ENCODE measurements at regions of chr10 and their contacts with region 1.

Region 1: DNA sequence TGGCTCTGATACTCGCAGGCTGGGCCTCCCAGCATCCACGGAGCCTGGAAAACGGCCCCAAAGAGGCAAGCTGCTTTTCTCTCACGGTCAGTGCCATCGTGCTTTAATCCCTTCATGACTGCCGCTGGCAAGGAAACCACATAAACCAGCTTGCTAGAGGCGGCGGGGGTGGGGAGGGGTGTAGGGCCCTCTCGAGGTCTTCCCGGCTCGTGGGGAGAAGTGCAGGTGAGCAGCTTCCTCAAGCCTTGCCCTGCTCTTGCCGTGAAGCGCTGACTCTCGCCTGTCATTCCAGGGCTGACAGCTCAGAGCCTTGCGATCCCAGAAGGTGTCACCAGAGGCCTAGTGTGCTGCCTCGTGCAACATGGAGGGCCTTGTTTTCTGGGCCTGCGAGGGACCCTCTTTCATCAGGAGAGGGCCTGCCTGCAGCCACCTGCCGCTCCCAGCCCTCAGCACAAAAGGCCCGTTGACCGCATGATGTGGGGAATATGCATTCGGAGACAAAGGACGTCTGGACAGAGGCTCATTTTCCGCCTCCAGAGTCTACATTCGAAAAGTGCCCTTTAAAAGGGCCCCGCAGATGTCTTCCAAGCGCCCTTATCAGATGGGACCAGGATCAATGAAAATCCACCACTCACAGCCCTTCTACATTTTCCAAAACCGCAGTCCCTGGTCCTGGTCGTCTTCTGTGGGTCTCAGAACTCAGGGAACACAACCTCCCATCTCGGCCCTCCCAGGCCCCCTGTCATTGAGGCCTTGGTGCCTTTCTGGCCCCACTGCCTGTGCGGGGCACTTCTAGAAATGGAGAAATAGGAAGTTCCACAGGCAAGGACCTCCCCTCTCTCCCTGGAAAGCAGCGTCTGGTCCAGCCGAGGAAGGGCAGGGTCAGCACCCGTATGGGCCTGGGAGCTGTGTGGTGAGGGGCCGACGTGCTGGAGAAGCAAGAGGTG is 58.7 kb downstream of the ZRANB1 start:
- DNase-seq: peak in 2 of 5 donors; percentile 8 to 52
- ATAC-seq: peak; percentile 27 to 51 (median 34)
- H3K4me3 ChIP-seq: no peak overlapping the region
- H3K27ac ChIP-seq: peak overlapping the region in 11 of 12 donors; percentile 24 to 86 (median 62)
- H3K4me1 ChIP-seq: peaks cover 0 to 67% (median 43%) of the 10 kb centered on the region in 12 donors
- H3K27me3 ChIP-seq: no peaks in the 10 kb centered on the region
- CTCF ChIP-seq: peak in 8 of 12 donors; percentile 8 to 41 (median 26)
- POLR2A ChIP-seq: no peak

Region 2: DNA sequence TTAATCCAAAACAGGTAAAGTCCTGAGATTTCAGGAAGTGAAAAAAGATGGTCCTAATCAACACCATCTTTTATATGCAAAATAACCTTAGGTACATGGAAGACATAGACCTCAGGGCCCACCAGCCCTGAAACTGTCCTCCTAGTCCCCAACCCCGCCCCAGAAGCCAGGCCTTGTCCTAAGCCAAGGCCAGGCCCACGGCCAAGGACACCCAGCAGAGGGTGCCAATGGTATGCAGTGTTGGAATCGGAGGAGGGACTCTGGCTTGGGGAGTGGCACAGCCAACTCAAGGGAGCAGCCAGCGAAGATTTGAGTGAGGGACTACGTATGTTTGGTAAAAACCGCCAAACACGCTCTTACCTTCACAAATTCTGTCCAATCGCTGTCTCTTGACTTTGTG is 38.0 kb after region 1 on chr10:
- intact Hi-C with region 1: loop called in 2 of 10 experiments (anchors 5 kb)
- DNase-seq: peak in 3 of 5 donors; percentile 69 to 77 (median 76)
- ATAC-seq: peak; percentile 89 to 96 (median 92)
- H3K4me3 ChIP-seq: no peak overlapping the region
- H3K27ac ChIP-seq: peak overlapping the region in 6 of 12 donors; percentile 9 to 58 (median 33)
- H3K4me1 ChIP-seq: peaks cover 6 to 74% (median 45%) of the 10 kb centered on the region in 12 donors
- H3K27me3 ChIP-seq: no peaks in the 10 kb centered on the region
- CTCF ChIP-seq: peak in 9 of 12 donors; percentile 9 to 48 (median 30)
- POLR2A ChIP-seq: no peak

Region 3: GRCh38 chr10:125123476-125124114 is 123.0 kb after region 1 on chr10:
- intact Hi-C with region 1: no loop called
- DNase-seq: peak; percentile 84 to 95 (median 89)
- ATAC-seq: peak; percentile 76 to 93 (median 88)
- H3K4me3 ChIP-seq: peak overlapping the region in 9 of 12 donors; percentile 6 to 39 (median 26)
- H3K27ac ChIP-seq: peak overlapping the region; percentile 44 to 88 (median 82)
- H3K4me1 ChIP-seq: peaks cover 7 to 98% (median 74%) of the 10 kb centered on the region in 12 donors
- H3K27me3 ChIP-seq: no peaks in the 10 kb centered on the region
- CTCF ChIP-seq: peak in 1 of 12 donors; percentile 19
- POLR2A ChIP-seq: no peak

Region 4: DNA sequence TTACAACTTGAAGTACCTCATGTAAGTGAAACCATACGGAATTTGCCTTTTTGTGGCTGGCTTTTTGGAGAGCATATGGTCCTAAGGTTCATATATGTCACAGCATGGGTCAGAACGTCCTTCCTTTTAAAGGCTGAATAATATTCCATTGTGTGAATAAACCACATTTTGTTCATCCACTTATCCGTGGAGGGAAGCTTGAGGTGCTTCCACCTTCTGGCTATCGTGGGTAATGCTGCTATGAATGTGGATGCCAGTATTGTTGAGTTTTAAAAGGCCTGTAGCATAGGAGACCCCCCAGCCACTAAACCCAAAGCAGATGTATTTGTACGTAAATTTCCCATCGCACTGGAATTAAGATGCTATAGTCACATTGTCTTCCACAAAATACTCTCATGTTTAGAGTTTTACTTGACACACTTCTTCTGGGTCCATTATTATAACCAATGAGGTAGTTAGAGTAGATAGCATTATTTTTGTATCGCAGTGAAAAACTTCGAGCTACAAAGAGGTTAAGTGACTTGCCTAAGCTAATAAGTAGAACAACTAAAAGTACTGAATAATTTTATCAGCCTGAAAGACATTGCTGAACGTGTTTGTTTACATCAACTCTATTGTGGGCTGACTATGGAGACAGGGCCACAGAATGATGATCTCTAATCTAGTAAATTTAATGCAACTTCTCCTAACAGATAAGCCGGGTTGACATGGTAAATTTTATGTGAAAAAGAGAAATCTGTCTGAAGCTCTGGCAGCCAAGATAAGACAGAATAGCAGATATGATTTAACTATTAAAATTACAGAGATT is 342.7 kb after region 1 on chr10:
- intact Hi-C with region 1: loop called in 2 of 10 experiments (anchors 10 kb)
- DNase-seq: no peak
- ATAC-seq: peak in 1 of 4 donors; percentile 7
- H3K4me3 ChIP-seq: no peak overlapping the region
- H3K27ac ChIP-seq: no peak overlapping the region
- H3K4me1 ChIP-seq: no peaks in the 10 kb centered on the region
- H3K27me3 ChIP-seq: peaks cover 0 to 3% (median 0%) of the 10 kb centered on the region in 9 donors
- CTCF ChIP-seq: peak; percentile 48 to 76 (median 60)
- POLR2A ChIP-seq: no peak

Measured in heart left ventricle (tissue), 16 donors.